ENCODE measurements at regions of chr2 and their contacts with region 1.

Region 1: GRCh38 chr2:70043252-70043875 is 43.9 kb upstream of the PCBP1 start:
- DNase-seq: peak in 6 of 9 donors; percentile 5 to 37 (median 11)
- ATAC-seq: peak; percentile 88
- H3K4me3 ChIP-seq: no peak overlapping the region
- H3K4me3 Mint-ChIP-seq: peak overlapping the region in 4 of 10 donors; percentile 5 to 80 (median 22)
- H3K27ac ChIP-seq: peak overlapping the region; percentile 25
- H3K27ac Mint-ChIP-seq: peak overlapping the region; percentile 6 to 89 (median 65)
- H3K4me1 ChIP-seq: peaks cover 9 to 11% of the 10 kb centered on the region in 2 donors
- H3K4me1 Mint-ChIP-seq: peaks cover 13 to 67% (median 23%) of the 10 kb centered on the region in 7 donors
- H3K27me3 ChIP-seq: no peaks in the 10 kb centered on the region
- H3K27me3 Mint-ChIP-seq: no peaks in the 10 kb centered on the region

Region 2: DNA sequence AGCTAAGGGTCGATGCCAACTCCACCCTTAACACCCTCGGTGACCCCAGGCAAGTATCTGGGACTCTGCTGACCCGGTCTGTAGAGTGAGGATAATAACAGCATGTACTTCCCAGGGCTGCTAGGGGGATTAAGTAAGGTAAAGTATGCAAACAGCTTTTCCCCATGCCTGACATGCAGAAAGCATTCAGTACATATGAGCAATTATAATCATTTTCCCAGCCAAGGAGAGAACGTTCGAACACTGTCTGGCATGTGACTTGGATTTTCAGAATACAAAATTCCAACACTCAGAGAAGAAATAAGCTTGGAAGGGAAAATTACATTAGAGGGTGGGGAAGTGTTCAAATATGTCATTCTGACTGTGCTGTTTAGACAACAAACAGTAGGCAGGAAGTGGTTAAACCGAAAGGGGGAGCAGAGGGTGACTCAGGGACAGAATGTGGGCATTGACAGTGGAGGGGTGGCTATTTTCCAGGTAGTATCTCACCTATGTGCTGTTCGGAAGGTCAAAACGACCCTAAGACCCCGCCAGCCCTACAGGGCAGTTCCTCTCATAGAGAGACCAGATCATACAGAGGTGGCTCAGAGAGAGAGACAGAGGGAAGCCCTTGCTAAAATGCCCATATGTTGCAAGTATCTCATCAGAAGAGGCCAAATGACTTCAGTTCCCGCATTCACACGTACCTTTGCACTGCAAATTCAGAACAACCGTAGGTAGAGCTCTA is 96.8 kb before region 1 on chr2:
- CTCF ChIA-PET with region 1: no interaction called
- POLR2A ChIA-PET with region 1: no interaction called
- intact Hi-C with region 1: loop called in 1 of 2 experiments (anchors 2 kb)
- DNase-seq: peak in 8 of 9 donors; percentile 24 to 64 (median 56)
- ATAC-seq: peak; percentile 84
- H3K4me3 ChIP-seq: no peak overlapping the region
- H3K4me3 Mint-ChIP-seq: peak overlapping the region in 9 of 10 donors; percentile 11 to 70 (median 31)
- H3K27ac ChIP-seq: no peak overlapping the region
- H3K27ac Mint-ChIP-seq: peak overlapping the region; percentile 4 to 94 (median 69)
- H3K4me1 ChIP-seq: peaks cover 16 to 17% of the 10 kb centered on the region in 2 donors
- H3K4me1 Mint-ChIP-seq: peaks cover 25 to 47% (median 33%) of the 10 kb centered on the region in 7 donors
- H3K27me3 ChIP-seq: no peaks in the 10 kb centered on the region
- H3K27me3 Mint-ChIP-seq: peaks cover 0 to 2% (median 0%) of the 10 kb centered on the region in 5 donors

Region 3: DNA sequence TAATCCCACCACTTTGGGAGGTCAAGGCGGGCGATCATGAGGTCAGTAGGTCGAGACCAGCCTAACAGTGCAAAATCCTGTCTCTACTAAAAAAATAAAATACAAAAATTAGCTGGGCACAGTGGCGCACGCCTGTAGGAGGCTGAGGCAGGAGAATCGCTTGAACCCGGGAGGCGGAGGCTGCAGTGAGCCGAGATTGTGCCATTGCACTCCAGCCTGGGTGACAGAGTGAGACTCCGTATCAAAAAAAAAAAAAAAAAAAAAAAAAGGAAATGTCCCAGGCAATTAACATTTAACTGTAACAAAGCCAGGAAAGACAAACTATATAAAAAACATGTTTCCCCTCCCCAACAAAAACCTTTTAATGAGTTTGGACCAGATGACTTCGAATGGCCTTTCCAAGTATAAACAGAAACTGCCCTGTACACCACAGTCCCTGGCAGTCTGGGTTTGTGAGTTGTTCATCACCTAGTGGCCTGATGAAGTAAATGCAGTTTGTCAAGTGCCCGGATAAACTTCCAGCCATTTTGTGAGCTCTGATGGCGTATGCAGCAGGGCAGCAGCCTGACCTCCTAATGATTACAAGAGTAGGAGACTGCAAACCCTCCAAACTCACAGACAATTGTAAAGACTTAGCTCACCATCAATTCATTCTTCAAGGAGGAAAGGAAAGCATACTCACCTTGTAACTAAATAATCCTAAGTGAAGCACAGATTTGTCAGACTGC is 27.3 kb after region 1 on chr2:
- CTCF ChIA-PET with region 1: interaction called, 4 read pairs
- POLR2A ChIA-PET with region 1: interaction called, 4 read pairs
- intact Hi-C with region 1: loop called in 1 of 2 experiments (anchors 1 kb)
- DNase-seq: peak in 8 of 9 donors; percentile 49 to 80 (median 70)
- ATAC-seq: peak; percentile 85
- H3K4me3 ChIP-seq: peak overlapping the region; percentile 48
- H3K4me3 Mint-ChIP-seq: peak overlapping the region; percentile 56 to 91 (median 80)
- H3K27ac ChIP-seq: peak overlapping the region; percentile 71
- H3K27ac Mint-ChIP-seq: peak overlapping the region; percentile 89 to 99 (median 95)
- H3K4me1 ChIP-seq: peaks cover 35 to 36% of the 10 kb centered on the region in 2 donors
- H3K4me1 Mint-ChIP-seq: peaks cover 19 to 72% (median 63%) of the 10 kb centered on the region in 7 donors
- H3K27me3 ChIP-seq: no peaks in the 10 kb centered on the region
- H3K27me3 Mint-ChIP-seq: no peaks in the 10 kb centered on the region